PC-9 (cell line): ENCODE measurements at regions of chr1 and their contacts with region 1.

Region 1: GRCh38 chr1:63662056-63662836 is 69.0 kb downstream of the PGM1 start:
- DNase-seq: peak; percentile 91 to 93
- H3K4me3 ChIP-seq: peak overlapping the region; percentile 45; the same call in 1 of the 2 replicates
- H3K27ac ChIP-seq: peak overlapping the region; percentile 100
- H3K4me1 ChIP-seq: peaks cover 62% of the 10 kb centered on the region
- H3K27me3 ChIP-seq: no peaks in the 10 kb centered on the region
- CTCF ChIP-seq: no peak

Region 2: DNA sequence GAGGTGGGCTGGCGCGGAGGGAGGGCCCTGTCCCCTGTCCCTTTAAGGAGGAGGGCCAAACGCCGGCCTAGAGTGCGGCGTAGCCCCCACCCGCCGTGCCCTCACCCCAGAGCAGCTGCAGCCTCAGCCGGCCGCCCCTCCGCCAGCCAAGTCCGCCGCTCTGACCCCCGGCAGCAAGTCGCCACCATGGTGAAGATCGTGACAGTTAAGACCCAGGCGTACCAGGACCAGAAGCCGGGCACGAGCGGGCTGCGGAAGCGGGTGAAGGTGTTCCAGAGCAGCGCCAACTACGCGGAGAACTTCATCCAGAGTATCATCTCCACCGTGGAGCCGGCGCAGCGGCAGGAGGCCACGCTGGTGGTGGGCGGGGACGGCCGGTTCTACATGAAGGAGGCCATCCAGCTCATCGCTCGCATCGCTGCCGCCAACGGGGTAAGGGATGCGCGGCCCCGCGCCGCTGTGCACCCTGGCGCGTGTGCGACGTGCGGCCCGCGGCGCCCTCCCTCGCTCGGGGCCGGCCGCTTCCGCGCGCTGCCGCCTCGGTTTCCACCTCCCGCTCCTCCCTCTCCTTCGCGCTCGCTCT is 68.9 kb before region 1 on chr1 and contains the start of gene PGM1:
- CTCF ChIA-PET with region 1: no interaction called
- POLR2A ChIA-PET with region 1: interaction called, 8 read pairs
- intact Hi-C with region 1: loop called (anchors 2 kb)
- DNase-seq: peak; percentile 65 to 84
- H3K4me3 ChIP-seq: peak within 1 kb of the TSS; percentile 76
- H3K27ac ChIP-seq: peak within 1 kb of the TSS; percentile 75
- H3K4me1 ChIP-seq: peaks cover 27% of the 10 kb centered on the region
- H3K27me3 ChIP-seq: no peaks in the 10 kb centered on the region
- CTCF ChIP-seq: no peak
- total RNA-seq, gene PGM1: 90.1 and 101 TPM in 2 replicates

Region 3: GRCh38 chr1:63651161-63651701 is 11.0 kb before region 1 on chr1:
- CTCF ChIA-PET with region 1: no interaction called
- POLR2A ChIA-PET with region 1: interaction called, 10 read pairs
- intact Hi-C with region 1: no loop called
- DNase-seq: peak in 1 of 2 experiments; percentile 45
- H3K4me3 ChIP-seq: no peak overlapping the region
- H3K27ac ChIP-seq: no peak overlapping the region
- H3K4me1 ChIP-seq: no peaks in the 10 kb centered on the region
- H3K27me3 ChIP-seq: no peaks in the 10 kb centered on the region
- CTCF ChIP-seq: no peak

Region 4: GRCh38 chr1:63691701-63692425 is 29.6 kb after region 1 on chr1:
- CTCF ChIA-PET with region 1: interaction called, 10 read pairs
- POLR2A ChIA-PET with region 1: interaction called, 4 read pairs
- intact Hi-C with region 1: no loop called
- DNase-seq: peak; percentile 62 to 86
- H3K4me3 ChIP-seq: no peak overlapping the region
- H3K27ac ChIP-seq: peak overlapping the region; percentile 61
- H3K4me1 ChIP-seq: peaks cover 11% of the 10 kb centered on the region
- H3K27me3 ChIP-seq: no peaks in the 10 kb centered on the region
- CTCF ChIP-seq: peak; percentile 88

Region 5: GRCh38 chr1:64163970-64164369 is 501.7 kb after region 1 on chr1:
- CTCF ChIA-PET with region 1: no interaction called
- POLR2A ChIA-PET with region 1: interaction called, 12 read pairs
- intact Hi-C with region 1: no loop called
- DNase-seq: no peak
- H3K4me3 ChIP-seq: no peak overlapping the region
- H3K27ac ChIP-seq: no peak overlapping the region
- H3K4me1 ChIP-seq: no peaks in the 10 kb centered on the region
- H3K27me3 ChIP-seq: no peaks in the 10 kb centered on the region
- CTCF ChIP-seq: peak; percentile 45; the same call in 1 of the 2 replicates